MCF 10A (cell line): ENCODE measurements at regions of chr2 and their contacts with region 1.

Region 1: DNA sequence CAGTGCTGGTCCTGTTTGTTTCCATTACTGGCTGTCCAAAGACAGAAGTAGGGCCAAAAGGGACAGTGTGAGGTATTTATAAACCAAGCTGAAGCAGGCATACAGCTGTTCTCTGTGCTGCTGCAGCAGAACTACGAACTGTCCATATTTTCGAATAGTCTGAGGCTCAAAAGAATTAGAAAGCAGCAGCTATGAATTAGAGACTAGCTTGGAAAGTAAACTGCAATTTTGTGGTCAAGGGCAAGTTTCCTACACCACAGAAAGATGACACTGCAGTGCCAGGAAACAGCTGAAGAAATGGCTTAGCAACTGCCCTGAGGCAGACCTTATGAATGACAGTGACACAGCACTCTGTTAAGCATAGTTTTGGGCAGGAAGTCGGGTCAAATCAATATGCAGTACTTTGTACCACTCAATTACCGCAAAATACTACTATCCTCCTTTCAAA is 125.3 kb downstream of the TMEM131 start:
- DNase-seq: peak; percentile 76
- H3K4me3 Mint-ChIP-seq: peak overlapping the region; percentile 51
- H3K27ac Mint-ChIP-seq: peak overlapping the region; percentile 70
- H3K4me1 Mint-ChIP-seq: peaks cover 26% of the 10 kb centered on the region
- H3K27me3 Mint-ChIP-seq: no peaks in the 10 kb centered on the region
- CTCF ChIP-seq: no peak

Region 2: GRCh38 chr2:97857553-97857952 is 12.9 kb before region 1 on chr2:
- CTCF ChIA-PET with region 1: no interaction called
- POLR2A ChIA-PET with region 1: interaction called, 14 read pairs
- intact Hi-C with region 1: no loop called
- DNase-seq: no peak
- H3K4me3 Mint-ChIP-seq: no peak overlapping the region
- H3K27ac Mint-ChIP-seq: no peak overlapping the region
- H3K4me1 Mint-ChIP-seq: no peaks in the 10 kb centered on the region
- H3K27me3 Mint-ChIP-seq: no peaks in the 10 kb centered on the region
- CTCF ChIP-seq: no peak

Region 3: DNA sequence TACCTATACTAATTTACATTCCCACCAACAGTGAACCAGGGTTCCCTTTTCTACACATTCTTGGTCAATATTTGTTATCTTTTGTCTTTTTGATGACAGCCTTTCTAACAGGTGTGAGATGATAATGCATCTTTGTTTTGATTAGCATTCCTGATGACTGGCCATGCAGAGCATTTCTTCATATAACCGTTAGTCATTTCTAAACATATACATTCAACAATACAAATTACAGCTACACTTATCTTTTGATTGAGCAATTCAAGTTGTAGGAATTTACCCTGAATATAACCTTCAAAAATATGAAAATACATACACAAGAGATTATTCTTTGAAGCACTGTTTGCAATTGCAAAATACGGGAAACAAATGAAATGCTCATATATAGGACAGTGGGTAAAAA is 30.4 kb after region 1 on chr2:
- CTCF ChIA-PET with region 1: no interaction called
- POLR2A ChIA-PET with region 1: interaction called, 11 read pairs
- intact Hi-C with region 1: no loop called
- DNase-seq: peak; percentile 43
- H3K4me3 Mint-ChIP-seq: no peak overlapping the region
- H3K27ac Mint-ChIP-seq: no peak overlapping the region
- H3K4me1 Mint-ChIP-seq: peaks cover 20% of the 10 kb centered on the region
- H3K27me3 Mint-ChIP-seq: no peaks in the 10 kb centered on the region
- CTCF ChIP-seq: no peak

Region 4: GRCh38 chr2:97966518-97967215 is 96.2 kb after region 1 on chr2:
- CTCF ChIA-PET with region 1: no interaction called
- POLR2A ChIA-PET with region 1: no interaction called
- intact Hi-C with region 1: no loop called
- DNase-seq: peak; percentile 16
- H3K4me3 Mint-ChIP-seq: no peak overlapping the region
- H3K27ac Mint-ChIP-seq: peak overlapping the region; percentile 26
- H3K4me1 Mint-ChIP-seq: peaks cover 33% of the 10 kb centered on the region
- H3K27me3 Mint-ChIP-seq: no peaks in the 10 kb centered on the region
- CTCF ChIP-seq: no peak

Region 5: DNA sequence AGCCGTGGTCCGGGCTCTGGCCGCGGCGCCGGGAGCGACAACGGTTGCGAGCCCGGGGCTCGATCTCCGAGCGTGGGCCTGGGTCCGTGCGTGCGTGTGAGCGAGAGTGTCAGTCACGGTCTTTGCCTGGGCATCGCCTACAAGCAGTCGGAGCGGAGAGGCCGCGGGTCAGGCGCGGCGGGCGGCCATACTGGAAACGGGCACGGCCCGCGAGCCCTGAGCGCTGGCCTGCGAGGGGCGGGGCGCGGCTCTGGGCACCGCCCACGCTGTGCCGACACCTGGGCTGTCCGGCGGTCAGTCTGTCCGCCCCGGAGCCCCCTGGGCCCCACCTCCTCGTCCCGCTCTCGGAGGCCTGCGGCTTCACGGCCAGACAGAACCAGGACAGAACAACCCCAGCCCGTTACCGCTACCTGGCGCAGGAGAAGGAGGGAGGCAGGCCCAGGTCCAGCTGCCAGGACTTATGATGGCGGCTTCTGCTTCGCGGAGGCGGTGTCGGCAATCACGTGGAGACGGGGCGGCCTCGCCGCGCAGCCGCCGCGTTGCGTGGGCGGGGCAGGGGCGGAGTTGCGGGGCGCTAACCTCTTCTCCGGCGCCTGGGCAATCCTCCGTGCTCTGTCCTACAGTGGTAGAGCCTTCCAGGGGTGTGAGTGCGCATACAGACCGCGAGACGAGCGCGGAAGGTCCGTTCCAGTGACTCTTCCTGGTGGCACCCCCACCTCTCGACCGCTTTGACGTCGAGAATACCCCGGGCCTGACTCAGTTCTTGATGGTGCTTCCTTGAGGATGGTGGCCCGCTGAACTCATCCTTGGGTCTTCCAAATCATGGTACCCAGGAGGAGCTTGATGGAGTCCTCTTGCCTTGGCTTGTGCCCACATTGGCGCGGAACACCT is 125.6 kb after region 1 on chr2 and contains the start of gene TMEM131:
- CTCF ChIA-PET with region 1: interaction called, 3 read pairs
- POLR2A ChIA-PET with region 1: interaction called, 12 read pairs
- intact Hi-C with region 1: loop called (anchors 1 kb)
- DNase-seq: peak; percentile 92
- H3K4me3 Mint-ChIP-seq: peak within 1 kb of the TSS; percentile 87
- H3K27ac Mint-ChIP-seq: peak within 1 kb of the TSS; percentile 75
- H3K4me1 Mint-ChIP-seq: peaks cover 22% of the 10 kb centered on the region
- H3K27me3 Mint-ChIP-seq: no peaks in the 10 kb centered on the region
- CTCF ChIP-seq: no peak
- total RNA-seq, gene TMEM131: 42.2 and 42.8 TPM in 2 replicates

Region 6: DNA sequence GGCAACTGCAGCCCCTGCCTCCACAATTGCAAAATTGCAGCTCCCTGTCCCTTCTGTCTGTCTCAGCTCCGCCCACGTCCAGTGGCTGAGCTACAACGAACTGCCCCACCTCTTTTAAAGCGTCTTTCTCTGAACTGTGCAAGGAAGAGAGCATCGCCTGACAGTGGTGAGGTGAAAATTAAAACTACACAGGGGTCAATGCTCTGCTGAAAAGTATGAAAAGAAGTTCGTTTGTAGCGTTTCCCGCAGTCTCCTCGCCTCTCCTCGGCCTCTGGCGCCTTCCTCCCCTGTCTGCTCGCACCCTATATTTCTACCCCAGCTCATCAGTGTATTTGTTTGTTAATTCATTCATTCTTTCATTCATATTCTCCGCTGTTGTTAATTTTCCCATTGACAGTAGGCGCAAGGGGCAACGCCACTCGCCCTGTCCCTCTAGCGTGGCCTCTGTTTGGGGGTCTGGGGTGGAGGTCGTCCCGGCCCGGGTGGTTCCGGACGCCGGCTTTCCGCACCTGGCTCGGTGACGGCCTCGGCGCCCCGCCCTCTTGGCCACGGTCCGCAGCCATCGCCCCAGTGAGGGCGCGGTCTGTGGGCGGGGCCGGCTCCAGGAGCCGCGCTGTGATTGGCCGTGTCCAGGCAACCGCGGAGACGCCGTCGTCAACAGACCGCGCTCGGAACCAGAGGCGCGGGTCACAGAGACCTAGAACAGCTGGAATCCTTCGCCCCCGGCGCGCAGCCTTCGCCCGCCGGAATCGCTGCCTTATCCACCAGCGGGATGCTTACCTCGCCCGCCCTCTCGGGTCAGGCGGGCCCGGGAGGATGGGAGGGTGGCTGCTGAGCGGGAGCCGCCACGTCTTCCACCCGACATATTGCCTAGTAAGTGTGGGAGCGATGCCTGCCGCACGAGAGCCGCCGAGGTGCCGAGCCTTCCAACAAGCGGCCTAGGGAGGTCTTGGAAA is 216.3 kb after region 1 on chr2 and contains the start of gene VWA3B:
- CTCF ChIA-PET with region 1: no interaction called
- POLR2A ChIA-PET with region 1: no interaction called
- intact Hi-C with region 1: loop called (anchors 5 kb)
- DNase-seq: peak; percentile 66
- H3K4me3 Mint-ChIP-seq: peak within 1 kb of the TSS; percentile 68
- H3K27ac Mint-ChIP-seq: peak within 1 kb of the TSS; percentile 11
- H3K4me1 Mint-ChIP-seq: peaks cover 5% of the 10 kb centered on the region
- H3K27me3 Mint-ChIP-seq: peaks cover 17% of the 10 kb centered on the region
- CTCF ChIP-seq: no peak
- total RNA-seq, gene VWA3B: not detected in 2 replicates